AG04449 (cell line): ENCODE measurements at regions of chr22 and their contacts with region 1.

Region 1: DNA sequence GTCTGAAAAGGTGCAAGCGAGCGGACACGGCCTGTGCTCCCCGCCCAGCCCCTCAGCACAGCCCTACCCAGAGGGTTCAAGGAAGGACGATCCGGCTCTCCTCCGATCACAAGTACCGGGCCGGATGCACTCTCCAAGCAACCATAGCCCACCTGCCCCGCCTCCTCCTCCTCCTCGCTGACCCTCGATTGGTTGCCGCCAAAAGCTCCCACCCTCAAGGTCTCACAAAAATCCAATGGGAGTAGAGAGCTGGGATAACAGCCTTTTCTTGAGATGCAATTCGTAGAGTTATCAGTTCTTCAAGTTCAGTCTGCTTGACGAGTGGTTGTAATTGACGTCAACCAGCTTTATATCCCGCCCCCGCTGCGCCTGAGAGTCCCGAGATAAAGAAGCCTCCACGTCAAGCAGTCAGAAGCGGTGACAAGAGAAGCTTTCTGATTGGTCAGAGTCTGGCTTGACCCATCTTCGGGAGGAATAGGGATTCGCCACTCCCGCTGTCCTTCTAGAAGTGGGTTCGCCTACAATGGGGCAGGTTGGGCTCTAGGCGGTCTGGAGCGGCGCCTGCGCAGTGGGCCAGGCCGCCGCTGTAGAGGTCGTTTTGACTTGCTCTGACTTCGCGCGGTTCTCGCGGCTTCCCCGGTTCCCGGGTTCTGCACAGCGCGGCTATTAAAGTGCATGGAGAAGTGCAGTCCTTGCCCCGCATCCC is at the start of gene IFT27:
- DNase-seq: peak; percentile 100
- H3K4me3 ChIP-seq: peak within 1 kb of the TSS; percentile 88
- CTCF ChIP-seq: no peak

Region 2: DNA sequence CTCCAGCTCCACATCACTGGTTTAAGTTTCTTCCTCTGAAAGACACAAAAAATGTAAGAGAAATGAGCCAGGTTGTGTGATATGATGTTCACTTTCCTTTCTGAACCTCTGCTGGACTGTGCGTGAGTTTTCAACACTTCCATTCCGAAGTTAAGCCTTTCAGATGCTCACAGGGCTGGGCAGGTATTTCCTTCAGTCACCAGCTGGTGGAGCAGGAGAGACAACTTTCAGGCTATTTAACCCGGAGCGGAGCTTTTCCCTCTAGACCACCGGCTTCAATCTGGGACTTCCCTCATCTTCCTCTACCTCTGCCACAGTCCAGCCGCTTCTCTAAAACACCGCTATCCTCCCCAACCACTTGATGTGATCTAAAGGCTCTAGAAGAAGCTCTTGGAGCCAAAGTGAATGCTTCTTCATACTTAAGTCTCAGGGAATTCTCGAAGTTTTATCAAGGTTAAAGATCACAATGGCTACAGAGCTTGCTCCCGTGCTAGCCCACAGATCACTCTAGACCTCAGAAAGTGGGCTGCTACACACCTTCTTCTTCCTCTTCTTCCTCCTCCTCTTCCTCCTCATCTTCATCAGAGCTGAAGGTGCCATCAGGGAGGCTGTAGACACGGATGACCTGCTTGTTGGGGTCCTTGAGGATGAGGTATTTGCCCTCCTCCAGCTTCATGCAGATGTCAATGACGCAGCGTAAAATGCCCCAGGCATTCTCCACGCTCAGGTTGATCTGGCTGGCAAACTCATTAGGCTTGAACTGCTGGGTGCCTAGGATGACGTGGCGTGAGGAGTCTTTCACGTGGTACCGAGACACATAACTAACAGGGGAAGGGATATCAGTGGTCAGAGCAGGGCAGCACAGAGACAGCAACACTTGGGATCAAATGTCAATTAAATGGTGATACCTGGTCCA is 264.9 kb before region 1 on chr22:
- CTCF ChIA-PET with region 1: interaction called, 57 read pairs
- POLR2A ChIA-PET with region 1: interaction called, 3 read pairs
- DNase-seq: no peak
- H3K4me3 ChIP-seq: no peak overlapping the region
- CTCF ChIP-seq: peak; percentile 68

Region 3: DNA sequence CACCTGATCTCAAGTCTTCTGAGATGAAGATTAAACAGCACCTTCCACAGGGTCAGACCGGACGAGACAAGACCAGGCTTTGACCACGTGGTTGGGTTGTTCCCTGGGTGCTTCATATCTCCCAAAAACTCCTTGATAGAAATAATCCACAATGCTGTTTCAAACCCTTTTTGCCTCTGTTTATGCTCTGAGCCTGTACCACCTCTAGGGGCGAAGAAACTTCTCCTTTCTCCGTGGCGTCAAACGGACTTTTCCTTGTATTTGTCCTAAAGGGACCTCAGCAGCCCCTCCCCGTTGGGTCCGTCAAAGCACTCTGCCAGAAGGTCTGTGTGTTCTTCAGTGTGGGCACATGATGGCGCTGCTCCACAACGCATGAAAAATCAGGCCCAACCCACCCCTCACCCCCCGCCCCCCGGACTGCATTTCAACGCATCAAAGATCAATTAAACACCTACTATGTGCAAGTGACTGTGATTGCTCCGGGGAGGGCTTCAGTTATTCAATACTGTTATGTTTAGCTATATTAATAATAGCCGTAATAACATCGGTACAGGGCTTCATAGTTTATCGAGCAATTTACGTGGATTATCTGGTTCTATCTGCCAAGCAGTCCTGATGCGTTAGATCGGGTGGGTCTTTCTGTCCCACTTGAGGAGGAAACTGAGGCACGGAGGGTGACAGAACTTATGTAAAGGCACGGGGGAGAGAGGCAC is 229.9 kb before region 1 on chr22:
- CTCF ChIA-PET with region 1: interaction called, 63 read pairs
- POLR2A ChIA-PET with region 1: no interaction called
- DNase-seq: no peak
- H3K4me3 ChIP-seq: no peak overlapping the region
- CTCF ChIP-seq: peak; percentile 67

Region 4: GRCh38 chr22:36552289-36552688 is 223.8 kb before region 1 on chr22:
- CTCF ChIA-PET with region 1: interaction called, 63 read pairs
- POLR2A ChIA-PET with region 1: interaction called, 5 read pairs
- DNase-seq: no peak
- H3K4me3 ChIP-seq: no peak overlapping the region
- CTCF ChIP-seq: no peak

Region 5: DNA sequence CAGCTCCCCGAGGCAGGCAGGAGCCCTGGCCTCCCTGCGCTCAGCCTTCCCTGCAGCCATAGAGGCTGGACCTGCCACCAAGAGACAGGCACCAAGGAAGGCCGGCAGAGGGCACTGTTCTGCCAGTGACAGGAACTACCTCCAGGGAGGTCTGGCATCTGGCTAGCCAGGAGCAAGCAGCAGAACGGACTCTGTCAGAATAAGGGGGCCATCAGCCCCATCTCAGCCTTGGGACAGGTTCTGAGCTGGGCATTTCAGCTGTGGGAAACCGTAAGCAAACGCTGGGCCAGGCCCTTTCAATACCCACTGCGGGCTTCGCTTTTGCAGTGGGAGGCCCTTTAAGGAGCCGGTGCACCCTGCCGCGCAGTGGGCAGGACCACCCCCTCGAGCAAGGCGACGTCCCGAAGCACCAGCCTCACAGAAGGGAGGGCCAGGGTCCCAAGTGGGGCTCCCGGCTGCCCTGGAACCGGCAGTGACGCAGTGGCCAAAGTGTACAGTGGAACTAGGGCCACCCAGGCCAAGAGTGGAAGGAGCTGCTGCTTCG is 18.4 kb before region 1 on chr22:
- CTCF ChIA-PET with region 1: interaction called, 176 read pairs
- POLR2A ChIA-PET with region 1: interaction called, 3 read pairs
- DNase-seq: no peak
- H3K4me3 ChIP-seq: no peak overlapping the region
- CTCF ChIP-seq: peak; percentile 92